Activated CD4-positive, alpha-beta T cell treated with anti-CD3 and anti-CD28 coated beads, Interleukin-2, amount 10 ng/mL, durations not matched to agents 24 days and 14 days (primary cell): ENCODE measurements at regions of chr14 and their contacts with region 1.

Region 1: DNA sequence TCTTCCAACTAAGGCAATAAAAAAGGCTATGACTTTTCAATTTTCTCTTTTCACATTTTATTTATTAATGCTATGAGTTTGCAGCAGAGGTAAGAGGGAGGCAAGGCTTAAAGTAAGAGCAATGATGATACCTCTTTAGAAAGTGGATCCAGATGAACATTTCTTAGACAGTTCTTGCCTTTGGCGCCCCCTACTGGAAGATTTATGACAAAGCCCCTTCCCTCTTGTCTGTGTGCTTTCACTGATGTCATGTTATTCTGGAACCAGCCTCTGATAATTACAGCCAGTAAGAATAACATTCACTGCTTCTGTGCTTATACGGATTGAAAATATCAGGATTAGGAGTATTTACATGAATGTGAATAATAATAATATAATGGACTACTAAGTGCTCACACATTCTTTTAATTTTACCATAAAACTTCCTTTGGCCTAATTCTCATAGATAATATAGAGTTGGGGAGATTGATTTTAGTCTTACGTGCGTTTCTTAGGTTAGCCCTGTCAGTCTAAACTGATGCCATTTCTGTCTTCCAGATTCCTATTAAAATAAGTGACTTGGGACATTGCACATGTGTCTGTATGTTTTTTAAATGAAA is 1929.9 kb upstream of the SEL1L start:
- DNase-seq: peak; percentile 61
- H3K4me3 Mint-ChIP-seq: no peak overlapping the region
- H3K27ac Mint-ChIP-seq: no peak overlapping the region
- H3K4me1 Mint-ChIP-seq: no peaks in the 10 kb centered on the region
- H3K27me3 Mint-ChIP-seq: no peaks in the 10 kb centered on the region

Region 2: DNA sequence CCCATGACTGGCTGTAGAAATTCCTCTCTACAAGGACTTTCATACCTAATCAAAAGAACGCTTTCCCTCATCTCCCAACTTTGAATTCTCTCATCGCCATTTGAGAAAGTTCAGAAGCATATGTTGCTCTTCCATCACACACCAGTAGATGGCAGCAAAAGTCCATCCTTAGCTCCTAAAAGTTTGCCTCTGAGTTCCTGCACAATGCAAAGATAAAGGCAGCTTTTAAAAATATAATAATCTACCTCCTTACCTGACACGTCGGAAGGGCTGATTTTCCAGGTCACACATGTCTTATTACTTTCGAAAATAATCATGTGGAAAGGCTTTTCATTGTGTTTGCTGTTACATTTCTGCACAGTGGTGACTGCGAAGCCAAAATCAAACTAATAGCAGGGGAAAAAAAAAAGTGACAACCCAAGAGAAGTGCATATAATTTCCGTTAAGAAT is 1473.3 kb before region 1 on chr14:
- intact Hi-C with region 1: loop called (anchors 5 kb)
- DNase-seq: peak; percentile 79
- H3K4me3 Mint-ChIP-seq: no peak overlapping the region
- H3K27ac Mint-ChIP-seq: no peak overlapping the region
- H3K4me1 Mint-ChIP-seq: no peaks in the 10 kb centered on the region
- H3K27me3 Mint-ChIP-seq: no peaks in the 10 kb centered on the region

Region 3: DNA sequence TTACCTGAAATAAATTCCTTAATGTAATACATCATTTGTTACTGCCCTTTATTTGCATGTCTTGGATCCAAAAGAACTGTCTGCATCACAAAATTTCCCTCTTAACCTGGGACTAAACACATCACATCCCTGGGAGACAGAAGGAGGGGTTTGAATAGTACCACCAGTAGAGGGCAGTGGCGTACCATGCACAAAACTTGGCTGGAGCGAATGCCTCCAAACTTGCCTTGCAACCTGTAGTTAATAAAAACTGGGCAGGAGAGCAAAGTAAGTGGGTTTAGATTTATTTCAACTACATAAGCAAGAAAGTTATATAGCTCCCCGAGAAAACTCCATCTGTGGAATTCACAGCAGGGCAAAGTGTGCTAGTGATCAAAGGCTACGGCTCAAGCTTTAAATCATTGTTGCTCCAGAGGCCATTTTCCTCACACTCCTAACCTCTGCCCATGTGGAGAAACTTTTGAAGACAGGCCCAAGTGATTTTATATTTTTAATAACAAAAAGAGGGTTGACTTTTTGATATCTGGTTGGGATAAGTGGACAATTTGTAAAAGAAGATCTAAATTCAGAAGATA is 753.2 kb before region 1 on chr14:
- intact Hi-C with region 1: loop called (anchors 5 kb)
- DNase-seq: peak; percentile 77
- H3K4me3 Mint-ChIP-seq: no peak overlapping the region
- H3K27ac Mint-ChIP-seq: no peak overlapping the region
- H3K4me1 Mint-ChIP-seq: no peaks in the 10 kb centered on the region
- H3K27me3 Mint-ChIP-seq: no peaks in the 10 kb centered on the region